HCT116 (cell line): ENCODE measurements at regions of chr4 and their contacts with region 1.

Region 1: DNA sequence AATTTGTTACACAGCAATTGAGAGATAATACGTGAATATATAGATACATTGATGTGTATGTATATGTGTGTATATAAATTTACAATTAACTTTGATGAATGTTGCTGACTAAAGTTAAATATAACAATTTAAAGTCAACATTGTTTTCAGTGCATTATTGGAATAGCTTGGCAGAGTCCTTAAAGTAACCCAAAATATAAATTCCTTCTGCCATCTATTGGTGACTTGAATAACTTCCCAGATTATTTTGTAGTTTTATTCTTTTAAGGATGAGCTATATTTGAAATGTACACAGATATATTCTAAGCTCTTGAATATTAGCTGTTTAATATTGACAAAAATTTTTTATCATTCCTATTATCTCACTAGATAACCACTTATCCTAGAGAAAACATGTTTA is 298.2 kb upstream of the FSTL5 start:
- DNase-seq: peak; percentile 10
- ATAC-seq: no peak
- H3K4me3 ChIP-seq: no peak overlapping the region
- H3K27ac ChIP-seq: no peak overlapping the region
- H3K4me1 ChIP-seq: no peaks in the 10 kb centered on the region
- H3K27me3 ChIP-seq: no peaks in the 10 kb centered on the region
- CTCF ChIP-seq: peak in 2 of 3 experiments; percentile 22 to 48; a peak in 2 of 6 replicates
- POLR2A ChIP-seq: no peak
- RAD21 ChIP-seq: peak; percentile 58

Region 2: GRCh38 chr4:161555689-161556660 is 906.0 kb before region 1 on chr4:
- CTCF ChIA-PET with region 1: no interaction called
- POLR2A ChIA-PET with region 1: no interaction called
- RAD21 ChIA-PET with region 1: no interaction called
- intact Hi-C with region 1: loop called (anchors 10 kb)
- DNase-seq: no peak
- ATAC-seq: peak; percentile 72
- H3K4me3 ChIP-seq: no peak overlapping the region
- H3K27ac ChIP-seq: peak overlapping the region; percentile 38; the same call in 1 of the 2 replicates
- H3K4me1 ChIP-seq: peaks cover 12 to 21% of the 10 kb centered on the region in 2 experiments; a peak in 3 of 4 replicates
- H3K27me3 ChIP-seq: no peaks in the 10 kb centered on the region
- CTCF ChIP-seq: no peak
- POLR2A ChIP-seq: no peak
- RAD21 ChIP-seq: no peak

Region 3: DNA sequence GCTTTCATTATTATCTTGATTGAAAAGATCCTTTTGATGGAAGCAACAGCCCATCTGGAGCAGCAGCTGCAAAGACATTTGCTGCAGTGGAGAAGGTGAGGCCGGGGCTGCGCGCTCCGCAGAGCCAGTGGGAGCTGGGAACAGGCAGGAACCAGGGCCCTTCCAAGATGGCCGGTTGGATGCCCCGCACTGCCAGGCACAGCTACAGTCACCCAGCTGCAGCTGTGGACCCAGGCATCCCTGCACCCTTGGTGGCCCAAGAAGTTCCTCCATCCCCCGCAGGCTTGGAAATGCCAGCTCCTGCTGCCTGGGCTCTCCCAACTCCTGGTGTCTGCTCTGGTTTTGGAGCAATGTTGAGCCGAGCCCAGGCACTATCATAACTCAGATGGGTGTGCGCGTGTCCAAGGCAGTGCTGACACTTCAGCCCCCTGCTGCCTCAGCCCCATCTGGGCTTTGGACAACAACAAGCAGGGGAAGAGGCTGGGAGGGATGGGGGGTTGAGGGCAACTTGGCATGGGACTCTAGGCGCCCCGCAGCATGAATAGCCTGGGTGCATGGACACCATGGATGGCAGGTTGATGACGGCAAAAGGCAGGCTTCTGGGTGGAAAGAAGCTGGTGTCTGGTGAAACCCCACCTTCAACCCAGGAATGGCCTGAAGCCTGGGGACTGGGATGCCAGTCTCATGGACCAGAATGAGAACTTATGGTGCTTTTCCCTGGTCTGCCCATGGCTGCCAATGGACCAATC is 670.0 kb before region 1 on chr4:
- CTCF ChIA-PET with region 1: no interaction called
- POLR2A ChIA-PET with region 1: no interaction called
- RAD21 ChIA-PET with region 1: no interaction called
- intact Hi-C with region 1: no loop called
- DNase-seq: no peak
- ATAC-seq: no peak
- H3K4me3 ChIP-seq: no peak overlapping the region
- H3K27ac ChIP-seq: no peak overlapping the region
- H3K4me1 ChIP-seq: no peaks in the 10 kb centered on the region
- H3K27me3 ChIP-seq: no peaks in the 10 kb centered on the region
- CTCF ChIP-seq: no peak
- POLR2A ChIP-seq: no peak
- RAD21 ChIP-seq: no peak

Region 4: GRCh38 chr4:163003979-163004378 is 542.0 kb after region 1 on chr4:
- CTCF ChIA-PET with region 1: no interaction called
- POLR2A ChIA-PET with region 1: no interaction called
- RAD21 ChIA-PET with region 1: no interaction called
- intact Hi-C with region 1: no loop called
- DNase-seq: no peak
- ATAC-seq: no peak
- H3K4me3 ChIP-seq: no peak overlapping the region
- H3K27ac ChIP-seq: no peak overlapping the region
- H3K4me1 ChIP-seq: no peaks in the 10 kb centered on the region
- H3K27me3 ChIP-seq: no peaks in the 10 kb centered on the region
- CTCF ChIP-seq: peak in 1 of 3 experiments; percentile 1; a peak in 1 of 6 replicates
- POLR2A ChIP-seq: no peak
- RAD21 ChIP-seq: no peak